MCF 10A (cell line): ENCODE measurements at regions of chr4 and their contacts with region 1.

Region 1: GRCh38 chr4:151563194-151563593 is 154.2 kb downstream of the FHIP1A start:
- DNase-seq: peak; percentile 79
- H3K4me3 Mint-ChIP-seq: no peak overlapping the region
- H3K27ac Mint-ChIP-seq: peak overlapping the region; percentile 7
- H3K4me1 Mint-ChIP-seq: peaks cover 14% of the 10 kb centered on the region
- H3K27me3 Mint-ChIP-seq: no peaks in the 10 kb centered on the region
- CTCF ChIP-seq: no peak

Region 2: GRCh38 chr4:151408630-151409469 is 154.3 kb before region 1 on chr4 and contains the start of gene FHIP1A:
- CTCF ChIA-PET with region 1: no interaction called
- POLR2A ChIA-PET with region 1: interaction called, 10 read pairs
- intact Hi-C with region 1: no loop called
- DNase-seq: peak; percentile 95
- H3K4me3 Mint-ChIP-seq: peak within 1 kb of the TSS; percentile 90
- H3K27ac Mint-ChIP-seq: peak within 1 kb of the TSS; percentile 94
- H3K4me1 Mint-ChIP-seq: peaks cover 22% of the 10 kb centered on the region
- H3K27me3 Mint-ChIP-seq: no peaks in the 10 kb centered on the region
- CTCF ChIP-seq: no peak
- total RNA-seq, gene FHIP1A: 14.8 and 19.8 TPM in 2 replicates